T-cell (primary cell): ENCODE measurements at regions of chr11 and their contacts with region 1.

Region 1: GRCh38 chr11:107799218-107799859 is 59.2 kb downstream of the SLC35F2 start:
- DNase-seq: peak in 33 of 35 experiments; percentile 3 to 67 (median 37)
- ATAC-seq: peak; percentile 36 to 75 (median 51)
- H3K4me3 ChIP-seq: no peak overlapping the region
- H3K4me3 Mint-ChIP-seq: no peak overlapping the region
- H3K27ac ChIP-seq: no peak overlapping the region
- H3K27ac Mint-ChIP-seq: no peak overlapping the region
- H3K4me1 ChIP-seq: no peaks in the 10 kb centered on the region
- H3K4me1 Mint-ChIP-seq: no peaks in the 10 kb centered on the region
- H3K27me3 ChIP-seq: no peaks in the 10 kb centered on the region
- H3K27me3 Mint-ChIP-seq: no peaks in the 10 kb centered on the region

Region 2: DNA sequence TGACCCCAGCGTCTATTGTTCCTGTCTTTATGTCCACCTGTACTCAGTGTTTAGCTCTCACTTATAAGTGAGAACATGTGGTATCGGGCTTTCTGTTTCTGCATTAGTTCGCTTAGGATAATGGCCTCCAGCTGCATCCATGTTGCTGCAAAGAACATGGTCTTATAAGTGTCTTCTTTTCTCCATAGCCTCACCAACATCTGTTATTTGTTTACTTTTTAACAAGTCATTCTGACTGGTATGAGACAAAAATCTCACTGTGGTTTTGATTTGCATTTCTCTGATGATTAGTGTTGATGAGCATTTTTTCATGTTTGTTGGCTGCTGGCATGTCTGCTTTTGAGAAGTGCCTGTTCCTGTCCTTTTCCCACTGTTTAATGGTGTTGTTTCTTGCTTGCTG is 65.8 kb before region 1 on chr11:
- CTCF ChIA-PET with region 1: no interaction called
- POLR2A ChIA-PET with region 1: no interaction called
- DNase-seq: no peak
- ATAC-seq: no peak
- H3K4me3 ChIP-seq: no peak overlapping the region
- H3K4me3 Mint-ChIP-seq: no peak overlapping the region
- H3K27ac ChIP-seq: no peak overlapping the region
- H3K27ac Mint-ChIP-seq: no peak overlapping the region
- H3K4me1 ChIP-seq: no peaks in the 10 kb centered on the region
- H3K4me1 Mint-ChIP-seq: no peaks in the 10 kb centered on the region
- H3K27me3 ChIP-seq: peaks cover 0 to 9% of the 10 kb centered on the region in 2 experiments
- H3K27me3 Mint-ChIP-seq: peaks cover 13 to 18% of the 10 kb centered on the region in 2 donors

Region 3: GRCh38 chr11:107785401-107785800 is 13.9 kb before region 1 on chr11:
- CTCF ChIA-PET with region 1: interaction called in 1 of 2 experiments, 4 read pairs
- POLR2A ChIA-PET with region 1: interaction called in 1 of 2 experiments, 10 read pairs
- DNase-seq: no peak
- ATAC-seq: no peak
- H3K4me3 ChIP-seq: no peak overlapping the region
- H3K4me3 Mint-ChIP-seq: no peak overlapping the region
- H3K27ac ChIP-seq: no peak overlapping the region
- H3K27ac Mint-ChIP-seq: no peak overlapping the region
- H3K4me1 ChIP-seq: no peaks in the 10 kb centered on the region
- H3K4me1 Mint-ChIP-seq: no peaks in the 10 kb centered on the region
- H3K27me3 ChIP-seq: peaks cover 0 to 3% of the 10 kb centered on the region in 2 experiments
- H3K27me3 Mint-ChIP-seq: peaks cover 0 to 7% of the 10 kb centered on the region in 2 donors